Activated CD4-positive, alpha-beta T cell treated with anti-CD3 and anti-CD28 coated beads, Interleukin-2, amount 10 ng/mL, durations not matched to agents 7 days and 5 days (primary cell): ENCODE measurements at regions of chr19 and their contacts with region 1.

Region 1: GRCh38 chr19:2636897-2637683 is 65.4 kb downstream of the GNG7 start:
- DNase-seq: peak; percentile 78
- H3K4me3 Mint-ChIP-seq: peak overlapping the region; percentile 36
- H3K27ac Mint-ChIP-seq: no peak overlapping the region
- H3K4me1 Mint-ChIP-seq: peaks cover 19% of the 10 kb centered on the region
- H3K27me3 Mint-ChIP-seq: peaks cover 6% of the 10 kb centered on the region

Region 2: DNA sequence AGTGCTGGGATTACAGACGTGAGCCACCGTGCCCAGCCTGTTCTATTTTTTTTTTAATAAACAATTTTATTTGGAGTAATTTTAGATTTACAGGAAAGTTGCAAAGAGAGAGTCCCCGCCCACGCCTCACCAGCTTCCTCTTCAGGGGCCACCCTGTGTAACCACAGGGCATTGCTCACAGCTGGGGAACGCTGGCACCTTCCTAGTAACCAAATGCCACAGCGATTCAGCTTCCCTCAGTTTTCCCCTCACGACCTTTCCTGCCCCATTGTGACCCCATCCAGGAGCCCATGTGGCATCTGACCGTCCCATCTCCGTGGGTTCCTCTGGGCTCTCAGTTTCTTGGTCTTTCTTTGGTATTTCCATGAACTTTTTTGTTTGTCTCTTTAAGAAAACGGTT is 18.5 kb before region 1 on chr19:
- CTCF ChIA-PET with region 1: interaction called, 18 read pairs
- POLR2A ChIA-PET with region 1: no interaction called
- DNase-seq: peak; percentile 63
- H3K4me3 Mint-ChIP-seq: peak overlapping the region; percentile 23
- H3K27ac Mint-ChIP-seq: peak overlapping the region; percentile 97
- H3K4me1 Mint-ChIP-seq: peaks cover 68% of the 10 kb centered on the region
- H3K27me3 Mint-ChIP-seq: no peaks in the 10 kb centered on the region